ENCODE measurements at regions of chr5 and their contacts with region 1.

Region 1: GRCh38 chr5:138223532-138223931 is 10.4 kb upstream of the CDC23 start:
- DNase-seq: no peak
- H3K4me3 ChIP-seq: no peak overlapping the region
- H3K27ac ChIP-seq: no peak overlapping the region
- H3K27me3 ChIP-seq: no peaks in the 10 kb centered on the region
- CTCF ChIP-seq: no peak

Region 2: GRCh38 chr5:138138949-138139780 is 84.4 kb before region 1 on chr5 and contains the start of gene NME5:
- CTCF ChIA-PET with region 1: no interaction called
- POLR2A ChIA-PET with region 1: no interaction called
- DNase-seq: no peak
- H3K4me3 ChIP-seq: peak within 1 kb of the TSS; percentile 55
- H3K27ac ChIP-seq: no peak within 1 kb of the TSS
- H3K27me3 ChIP-seq: no peaks in the 10 kb centered on the region
- CTCF ChIP-seq: no peak
- polyA plus RNA-seq, gene NME5: 0.35 and 0.43 TPM in 2 replicates

Region 3: GRCh38 chr5:138213161-138214029 is 10.1 kb before region 1 on chr5 and contains the start of gene CDC23:
- CTCF ChIA-PET with region 1: interaction called, 20 read pairs
- POLR2A ChIA-PET with region 1: no interaction called
- DNase-seq: peak; percentile 91
- H3K4me3 ChIP-seq: peak within 1 kb of the TSS; percentile 98
- H3K27ac ChIP-seq: peak within 1 kb of the TSS; percentile 77
- H3K27me3 ChIP-seq: no peaks in the 10 kb centered on the region
- CTCF ChIP-seq: no peak
- polyA plus RNA-seq, gene CDC23: 30.4 and 38.1 TPM in 2 replicates

Region 4: DNA sequence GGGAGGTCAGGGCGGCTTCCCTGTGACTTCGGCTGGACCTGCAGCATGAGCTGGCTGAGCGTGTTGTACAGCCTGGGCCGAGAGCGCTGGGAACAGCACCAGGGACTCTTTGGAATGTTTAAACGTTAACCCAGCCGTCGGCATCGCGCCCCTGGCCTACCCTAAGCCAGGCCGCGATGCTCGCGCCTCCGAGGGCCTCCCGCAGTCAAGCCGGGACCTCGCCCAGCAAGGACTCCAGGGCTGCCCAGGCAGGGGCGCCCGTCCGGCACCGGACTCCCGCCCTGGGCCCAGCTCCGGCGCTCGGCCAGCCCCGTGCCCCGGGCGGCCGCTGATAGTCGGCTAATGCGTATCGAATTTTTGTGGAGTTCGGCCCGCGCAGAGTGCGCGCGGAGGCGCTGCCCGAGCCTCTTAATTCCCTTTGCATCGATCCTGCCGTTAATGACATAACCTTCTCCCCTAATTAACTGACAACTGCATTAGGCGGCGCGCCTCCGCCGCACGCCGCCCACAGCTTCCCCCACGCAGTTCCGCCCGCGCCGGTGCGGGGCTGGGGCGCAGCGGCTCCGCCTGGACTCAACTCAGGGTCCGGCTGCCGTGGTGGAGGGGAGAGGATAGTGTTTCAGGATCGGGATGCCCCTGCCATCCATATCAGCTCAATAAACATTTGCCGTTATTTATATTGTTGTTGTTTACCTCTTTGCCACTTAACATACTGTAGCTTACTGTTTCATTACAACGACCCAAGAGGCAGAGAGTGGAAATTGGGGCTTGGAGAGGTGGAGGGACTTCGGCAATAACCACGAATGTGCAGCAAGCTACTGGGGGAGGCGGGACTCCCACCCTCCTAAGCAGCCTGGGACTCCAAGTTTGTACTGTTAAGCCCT is 18.4 kb after region 1 on chr5:
- CTCF ChIA-PET with region 1: interaction called, 33 read pairs
- POLR2A ChIA-PET with region 1: no interaction called
- DNase-seq: no peak
- H3K4me3 ChIP-seq: peak overlapping the region; percentile 41
- H3K27ac ChIP-seq: no peak overlapping the region
- H3K27me3 ChIP-seq: peaks cover 39% of the 10 kb centered on the region
- CTCF ChIP-seq: no peak; the same call in 1 of the 2 replicates

Region 5: DNA sequence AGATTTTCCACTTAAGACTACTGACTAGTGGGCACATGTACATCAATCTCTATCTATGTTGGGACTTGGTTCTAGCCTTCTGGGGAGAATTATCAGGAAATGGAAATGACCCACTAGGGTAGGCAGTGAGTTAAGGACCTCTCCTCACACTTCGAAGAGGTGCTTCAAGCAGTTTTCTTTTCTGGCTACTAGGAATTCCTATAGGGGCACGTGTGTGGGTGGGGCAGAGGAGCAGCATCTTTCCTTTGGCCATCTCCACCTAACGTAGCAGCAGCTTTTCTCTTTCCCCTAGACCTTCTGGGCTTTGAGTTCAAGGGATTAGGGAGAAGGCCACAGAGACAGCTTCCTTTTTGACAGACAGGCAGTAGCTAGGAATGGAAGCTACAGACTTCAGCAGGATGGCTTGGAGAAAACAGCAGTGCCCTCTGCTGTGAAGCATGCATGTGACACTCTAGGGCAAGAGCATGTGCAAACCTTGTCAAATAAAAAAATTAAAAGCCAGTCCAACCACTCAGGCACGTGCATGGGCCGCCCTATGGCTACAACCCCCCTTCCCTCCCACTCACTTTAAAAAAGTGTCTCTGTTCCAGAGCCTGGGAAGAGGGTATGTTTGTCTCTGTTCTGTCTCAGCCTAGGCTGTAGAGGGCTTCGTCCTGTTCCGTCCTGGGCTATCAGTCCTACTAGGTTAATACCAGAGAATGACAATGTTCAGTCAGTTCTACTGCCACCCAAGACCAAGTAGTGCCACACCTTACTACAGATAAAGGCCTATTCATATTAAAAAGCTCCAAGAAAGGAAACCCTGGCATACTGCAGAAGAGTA is 59.6 kb after region 1 on chr5:
- CTCF ChIA-PET with region 1: interaction called, 58 read pairs
- POLR2A ChIA-PET with region 1: no interaction called
- DNase-seq: peak; percentile 20
- H3K4me3 ChIP-seq: no peak overlapping the region
- H3K27ac ChIP-seq: no peak overlapping the region
- H3K27me3 ChIP-seq: no peaks in the 10 kb centered on the region
- CTCF ChIP-seq: peak; percentile 68

Region 6: GRCh38 chr5:138408023-138408422 is 184.5 kb after region 1 on chr5:
- CTCF ChIA-PET with region 1: interaction called, 18 read pairs
- POLR2A ChIA-PET with region 1: no interaction called
- DNase-seq: no peak
- H3K4me3 ChIP-seq: no peak overlapping the region
- H3K27ac ChIP-seq: no peak overlapping the region
- H3K27me3 ChIP-seq: no peaks in the 10 kb centered on the region
- CTCF ChIP-seq: no peak

Measured in AG04450 (cell line).